ENCODE measurements at regions of chr3 and their contacts with region 1.

Region 1: GRCh38 chr3:153137626-153138025 is 24.4 kb upstream of the RAP2B start:
- DNase-seq: no peak
- H3K4me3 ChIP-seq: no peak overlapping the region
- H3K27ac ChIP-seq: no peak overlapping the region
- H3K4me1 ChIP-seq: no peaks in the 10 kb centered on the region
- H3K27me3 ChIP-seq: no peaks in the 10 kb centered on the region
- CTCF ChIP-seq: no peak
- EP300 ChIP-seq: no peak
- POLR2A ChIP-seq: no peak

Region 2: GRCh38 chr3:153026026-153026425 is 111.6 kb before region 1 on chr3:
- intact Hi-C with region 1: no loop called
- DNase-seq: no peak
- H3K4me3 ChIP-seq: no peak overlapping the region
- H3K27ac ChIP-seq: no peak overlapping the region
- H3K4me1 ChIP-seq: no peaks in the 10 kb centered on the region
- H3K27me3 ChIP-seq: no peaks in the 10 kb centered on the region
- CTCF ChIP-seq: peak in 2 of 3 donors; percentile 21 to 24
- EP300 ChIP-seq: no peak
- POLR2A ChIP-seq: no peak

Region 3: DNA sequence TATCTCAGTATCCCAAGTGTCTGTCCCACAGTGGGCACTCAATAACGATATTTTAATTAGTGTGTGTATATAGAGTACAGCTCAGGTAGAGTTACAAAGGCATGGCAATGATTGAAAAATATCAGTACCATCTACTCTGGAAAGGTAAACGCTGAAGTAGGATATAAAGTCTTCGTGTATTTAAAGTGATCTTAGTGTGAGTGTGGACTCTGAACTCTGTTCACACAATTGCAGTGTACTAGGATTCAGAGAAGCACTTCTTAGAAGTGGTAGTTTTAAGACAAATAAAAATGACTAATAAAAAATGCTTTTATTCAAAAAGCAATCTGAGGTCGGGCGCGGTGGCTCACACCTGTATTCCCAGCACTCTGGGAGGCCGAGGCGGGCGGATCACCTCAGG is 38.5 kb before region 1 on chr3:
- intact Hi-C with region 1: loop called in 1 of 4 experiments (anchors 2 kb)
- DNase-seq: no peak
- H3K4me3 ChIP-seq: no peak overlapping the region
- H3K27ac ChIP-seq: no peak overlapping the region
- H3K4me1 ChIP-seq: no peaks in the 10 kb centered on the region
- H3K27me3 ChIP-seq: no peaks in the 10 kb centered on the region
- CTCF ChIP-seq: no peak
- EP300 ChIP-seq: no peak
- POLR2A ChIP-seq: no peak

Region 4: DNA sequence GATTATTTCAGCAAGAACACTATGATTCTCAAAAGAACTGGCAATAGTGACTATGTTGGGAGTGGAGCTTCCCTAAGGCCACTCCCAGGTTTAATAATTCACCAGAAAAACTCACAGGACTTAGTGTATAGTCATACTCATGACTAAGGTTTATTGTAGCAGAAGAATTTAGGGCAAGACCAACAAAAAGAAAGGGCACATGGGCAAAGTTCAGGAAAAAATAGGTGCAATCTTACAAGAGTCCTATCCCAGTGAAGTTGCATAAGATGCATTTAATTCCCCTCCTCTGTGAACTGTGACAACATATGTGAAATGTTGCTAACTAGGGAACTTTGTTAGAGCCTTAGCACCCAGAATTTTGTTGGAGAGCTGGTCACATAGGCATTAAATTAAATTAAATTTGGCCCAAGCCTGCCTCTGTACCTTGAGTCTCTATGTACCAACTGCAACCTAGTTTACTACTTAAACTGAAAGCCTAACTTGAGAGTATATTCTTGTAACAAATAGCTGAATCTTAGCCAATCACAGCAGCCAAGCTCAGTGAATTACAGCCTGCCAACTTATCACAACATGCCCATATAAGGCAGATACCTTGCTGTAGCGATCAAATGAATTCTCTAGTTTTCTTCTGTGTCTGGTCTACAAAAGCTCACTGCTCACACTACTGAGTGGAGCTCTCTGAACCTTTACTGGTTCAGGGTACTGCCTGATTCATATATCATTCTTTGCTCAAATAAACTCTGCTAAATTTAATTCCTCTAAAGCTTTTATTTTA is 597.3 kb after region 1 on chr3:
- intact Hi-C with region 1: no loop called
- DNase-seq: no peak
- H3K4me3 ChIP-seq: no peak overlapping the region
- H3K27ac ChIP-seq: no peak overlapping the region
- H3K4me1 ChIP-seq: no peaks in the 10 kb centered on the region
- H3K27me3 ChIP-seq: no peaks in the 10 kb centered on the region
- CTCF ChIP-seq: no peak
- EP300 ChIP-seq: no peak
- POLR2A ChIP-seq: no peak

Measured in ovary (tissue), 10 donors.